ENCODE measurements at regions of chr10 and their contacts with region 1.

Region 1: DNA sequence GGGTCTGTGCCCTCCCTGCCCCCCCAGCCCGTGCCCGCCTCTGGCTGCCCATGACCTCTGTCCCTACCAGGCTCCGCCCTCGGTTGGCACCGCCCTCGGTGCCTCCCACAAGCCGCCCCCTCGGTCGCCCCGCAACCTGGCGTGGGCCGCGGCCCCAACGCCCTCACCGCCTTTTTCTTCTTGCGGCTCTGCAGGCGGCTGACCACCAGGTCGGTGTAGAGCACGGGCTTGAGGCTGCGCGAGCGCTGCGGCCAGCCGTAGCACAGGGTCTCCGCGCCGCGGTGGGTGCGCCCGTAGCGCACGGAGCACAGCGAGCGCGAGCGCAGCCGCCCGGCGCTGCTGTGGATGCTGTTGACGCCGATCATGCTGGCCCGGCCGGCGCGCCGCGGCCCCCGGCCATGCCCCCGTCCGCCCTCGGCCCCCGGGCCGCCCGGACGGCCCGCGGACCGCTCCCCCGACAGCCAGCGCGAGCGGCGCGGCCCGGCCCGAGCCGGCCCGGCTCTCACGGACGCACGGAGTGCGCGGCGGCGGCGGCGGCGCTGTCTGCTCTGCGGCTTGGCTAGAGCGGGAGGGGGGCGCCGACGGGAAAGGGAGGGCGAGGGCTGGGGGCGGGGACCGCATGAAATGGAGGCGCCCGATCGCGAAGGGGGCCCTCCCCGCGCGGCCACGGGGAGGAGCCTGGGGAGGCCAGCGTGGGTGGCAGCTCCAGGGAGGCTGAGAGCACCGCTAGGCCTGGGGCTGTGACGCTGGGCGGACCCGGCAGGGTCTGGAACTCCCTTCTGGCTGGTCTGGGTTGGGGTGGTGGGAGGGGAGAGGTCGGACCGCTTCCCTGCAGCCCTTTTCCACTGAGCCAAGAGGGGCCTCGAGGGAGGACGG is 9.6 kb downstream of the PSD start:
- DNase-seq: no peak
- H3K4me3 ChIP-seq: peak overlapping the region; percentile 21
- H3K27me3 ChIP-seq: peaks cover 48% of the 10 kb centered on the region
- CTCF ChIP-seq: no peak

Region 2: DNA sequence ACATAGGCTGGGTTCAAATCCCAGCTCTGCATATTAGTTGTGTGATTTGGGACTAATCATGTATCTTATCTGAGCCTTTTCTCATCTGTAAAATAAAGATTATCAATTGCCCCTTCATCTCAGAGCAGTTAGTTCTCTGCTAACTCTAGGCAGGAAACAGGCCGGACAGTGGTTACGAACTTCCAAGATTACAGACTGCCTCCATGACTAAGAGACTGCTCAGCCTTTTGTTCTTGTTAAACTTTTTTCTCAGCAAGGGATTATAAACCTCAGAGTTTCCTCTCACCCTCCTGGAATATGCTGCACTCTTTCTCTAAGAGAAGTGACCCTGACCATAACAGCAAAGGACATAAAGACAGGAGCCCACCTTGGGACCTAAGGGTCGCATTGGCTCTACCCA is 66.0 kb before region 1 on chr10:
- CTCF ChIA-PET with region 1: no interaction called
- POLR2A ChIA-PET with region 1: no interaction called
- DNase-seq: no peak
- H3K4me3 ChIP-seq: no peak overlapping the region
- H3K27me3 ChIP-seq: no peaks in the 10 kb centered on the region
- CTCF ChIP-seq: no peak

Region 3: GRCh38 chr10:102368072-102368471 is 40.9 kb before region 1 on chr10:
- CTCF ChIA-PET with region 1: interaction called, 5 read pairs
- POLR2A ChIA-PET with region 1: interaction called, 15 read pairs
- DNase-seq: no peak
- H3K4me3 ChIP-seq: no peak overlapping the region
- H3K27me3 ChIP-seq: no peaks in the 10 kb centered on the region
- CTCF ChIP-seq: no peak

Region 4: GRCh38 chr10:102470579-102471546 is 61.9 kb after region 1 on chr10:
- CTCF ChIA-PET with region 1: no interaction called
- POLR2A ChIA-PET with region 1: no interaction called
- DNase-seq: no peak
- H3K4me3 ChIP-seq: no peak overlapping the region
- H3K27me3 ChIP-seq: no peaks in the 10 kb centered on the region
- CTCF ChIP-seq: no peak